ENCODE measurements at regions of chr11 and their contacts with region 1.

Region 1: GRCh38 chr11:17991783-17992433 is 20.9 kb downstream of the SERGEF start:
- DNase-seq: peak in 2 of 6 donors; percentile 18 to 37
- ATAC-seq: peak; percentile 63 to 92 (median 87)
- H3K4me3 ChIP-seq: no peak overlapping the region
- H3K27ac ChIP-seq: no peak overlapping the region
- H3K4me1 ChIP-seq: no peaks in the 10 kb centered on the region
- H3K27me3 ChIP-seq: no peaks in the 10 kb centered on the region
- CTCF ChIP-seq: peak; percentile 33 to 56 (median 52)

Region 2: GRCh38 chr11:17890325-17890724 is 101.6 kb before region 1 on chr11:
- intact Hi-C with region 1: no loop called
- DNase-seq: no peak
- ATAC-seq: no peak
- H3K4me3 ChIP-seq: no peak overlapping the region
- H3K27ac ChIP-seq: no peak overlapping the region
- H3K4me1 ChIP-seq: no peaks in the 10 kb centered on the region
- H3K27me3 ChIP-seq: no peaks in the 10 kb centered on the region
- CTCF ChIP-seq: no peak

Region 3: GRCh38 chr11:18105802-18106574 is 114.1 kb after region 1 on chr11 and contains the start of gene SAAL1:
- intact Hi-C with region 1: loop called in 1 of 3 experiments (anchors 10 kb)
- DNase-seq: peak; percentile 77 to 96 (median 86)
- ATAC-seq: peak; percentile 98 to 100 (median 99)
- H3K4me3 ChIP-seq: peak within 1 kb of the TSS; percentile 74 to 100 (median 90)
- H3K27ac ChIP-seq: no peak within 1 kb of the TSS
- H3K4me1 ChIP-seq: peaks cover 0 to 7% (median 0%) of the 10 kb centered on the region in 3 donors
- H3K27me3 ChIP-seq: no peaks in the 10 kb centered on the region
- CTCF ChIP-seq: peak in 3 of 4 donors; percentile 14 to 52 (median 50)
- total RNA-seq, gene SAAL1: 4.6 to 7.4 (median 5.5) TPM

Region 4: DNA sequence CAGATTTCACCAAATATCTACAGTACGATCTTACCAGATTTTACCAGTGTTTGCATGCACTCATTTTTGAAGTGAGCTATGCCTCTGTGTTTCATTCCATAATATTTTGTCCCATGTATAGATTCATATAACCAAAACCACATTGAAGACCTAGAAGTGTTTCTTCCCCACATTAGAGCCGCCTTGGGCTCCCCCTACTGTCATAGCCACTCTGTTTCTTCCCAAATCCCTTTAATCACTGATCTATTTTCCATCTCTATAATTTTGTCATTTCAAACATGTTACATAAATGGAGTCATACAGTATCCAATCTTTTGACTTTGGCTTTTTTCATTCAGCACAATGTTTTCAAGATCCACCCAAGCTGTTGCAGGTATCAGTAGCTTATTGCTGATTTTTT is 153.1 kb after region 1 on chr11:
- intact Hi-C with region 1: no loop called
- DNase-seq: no peak
- ATAC-seq: no peak
- H3K4me3 ChIP-seq: no peak overlapping the region
- H3K27ac ChIP-seq: no peak overlapping the region
- H3K4me1 ChIP-seq: no peaks in the 10 kb centered on the region
- H3K27me3 ChIP-seq: peaks cover 0 to 4% (median 0%) of the 10 kb centered on the region in 4 donors
- CTCF ChIP-seq: no peak

Measured in pancreas (tissue), 10 donors.